B cell (primary cell): ENCODE measurements at regions of chr19 and their contacts with region 1.

Region 1: GRCh38 chr19:41597600-41598041 is 21.7 kb downstream of the CEACAM21 start:
- DNase-seq: peak; percentile 91
- ATAC-seq: peak; percentile 95
- H3K4me3 ChIP-seq: no peak overlapping the region
- H3K4me3 Mint-ChIP-seq: no peak overlapping the region
- H3K27ac ChIP-seq: no peak overlapping the region
- H3K27ac Mint-ChIP-seq: peak overlapping the region; percentile 42
- H3K4me1 ChIP-seq: peaks cover 0 to 19% of the 10 kb centered on the region in 2 donors
- H3K4me1 Mint-ChIP-seq: peaks cover 14% of the 10 kb centered on the region
- H3K27me3 ChIP-seq: peaks cover 0 to 3% (median 0%) of the 10 kb centered on the region in 4 experiments
- H3K27me3 Mint-ChIP-seq: peaks cover 12% of the 10 kb centered on the region
- CTCF ChIP-seq: peak; percentile 93

Region 2: DNA sequence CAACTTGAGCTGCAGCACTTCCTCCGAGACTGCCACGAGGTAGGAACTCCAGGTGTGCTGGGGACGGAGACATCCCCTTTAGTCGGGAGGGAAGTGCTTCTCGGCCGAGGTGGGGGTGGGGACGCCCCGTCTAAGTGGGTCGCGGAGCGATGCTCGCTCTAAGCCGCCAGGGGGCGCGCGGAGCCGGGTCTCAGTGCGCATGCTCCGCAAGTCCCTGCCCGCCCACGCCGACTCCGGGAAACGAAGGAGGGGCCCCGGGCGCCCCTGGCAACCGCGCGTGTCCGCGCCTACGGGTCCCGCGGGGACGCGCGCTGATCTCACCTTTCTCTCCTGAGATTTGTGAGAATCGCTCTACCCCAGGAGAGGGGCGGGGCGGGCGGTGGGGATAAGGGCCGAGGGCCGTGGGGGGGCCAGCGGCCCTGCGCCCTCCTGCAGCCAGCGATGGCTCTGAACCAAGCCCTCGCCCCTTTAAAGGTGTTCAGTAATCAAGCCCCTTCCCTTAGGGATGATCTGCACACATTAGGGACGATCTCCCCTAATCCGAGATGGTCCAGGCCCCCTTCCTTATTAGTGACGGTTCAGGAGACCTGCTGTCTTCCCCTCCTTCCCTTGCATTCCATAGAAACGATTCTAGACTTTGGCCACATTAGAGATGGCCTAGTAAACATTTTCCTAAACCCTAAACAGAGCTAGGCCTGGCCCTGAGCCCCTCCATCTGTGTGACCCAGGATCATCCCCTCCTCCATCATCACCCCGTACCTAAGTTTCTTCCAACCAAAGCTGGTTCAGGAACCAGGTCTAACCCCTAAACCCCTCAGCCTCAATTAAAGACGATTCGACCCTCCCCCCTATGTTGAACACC is 1068.3 kb before region 1 on chr19:
- CTCF ChIA-PET with region 1: no interaction called
- POLR2A ChIA-PET with region 1: no interaction called
- intact Hi-C with region 1: loop called (anchors 5 kb)
- DNase-seq: peak; percentile 95
- ATAC-seq: peak; percentile 91
- H3K4me3 ChIP-seq: peak overlapping the region; percentile 9 to 69 (median 41)
- H3K4me3 Mint-ChIP-seq: peak overlapping the region; percentile 82
- H3K27ac ChIP-seq: no peak overlapping the region
- H3K27ac Mint-ChIP-seq: peak overlapping the region; percentile 64
- H3K4me1 ChIP-seq: peaks cover 13 to 14% of the 10 kb centered on the region in 2 donors
- H3K4me1 Mint-ChIP-seq: peaks cover 13% of the 10 kb centered on the region
- H3K27me3 ChIP-seq: peaks cover 0 to 35% (median 18%) of the 10 kb centered on the region in 4 experiments
- H3K27me3 Mint-ChIP-seq: peaks cover 44% of the 10 kb centered on the region
- CTCF ChIP-seq: peak; percentile 91

Region 3: DNA sequence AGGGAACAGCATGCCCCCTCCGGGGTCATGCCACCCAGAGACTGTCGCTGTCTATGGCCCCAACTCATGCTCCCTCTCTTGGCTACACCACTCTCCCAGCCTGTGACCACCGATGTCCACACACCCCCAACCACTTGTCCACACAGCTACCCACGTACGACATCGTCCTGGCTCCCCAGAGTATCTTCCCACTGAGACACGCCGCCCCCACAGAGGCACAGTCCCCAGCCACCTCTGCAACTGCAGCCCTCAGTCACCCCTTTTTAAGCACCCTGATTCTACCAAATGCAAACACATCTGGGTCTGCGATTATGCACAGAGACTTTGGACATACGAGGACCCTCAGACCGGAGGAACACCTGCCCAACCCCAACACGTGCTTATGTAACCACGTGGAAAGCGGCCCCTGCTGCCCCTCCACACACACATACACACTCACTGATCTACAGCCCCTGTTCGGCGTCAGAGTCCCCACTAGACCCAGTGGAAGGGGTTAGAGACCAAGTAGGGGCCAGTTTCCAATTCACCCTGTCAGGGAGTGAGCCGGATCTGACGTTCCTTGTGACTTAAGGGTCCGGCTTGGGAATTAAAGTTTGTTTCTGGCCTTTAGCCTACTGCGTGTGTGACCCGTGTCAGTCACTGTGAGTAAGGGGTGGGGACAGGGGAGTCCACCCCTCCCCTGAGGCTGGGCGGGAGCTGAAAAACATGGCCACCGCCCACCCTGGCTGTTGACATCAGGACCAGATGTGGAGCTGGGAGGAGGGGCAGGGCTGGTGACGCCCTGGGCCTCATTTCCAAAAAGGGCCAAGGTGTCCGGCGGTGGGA is 390.5 kb before region 1 on chr19:
- CTCF ChIA-PET with region 1: interaction called, 16 read pairs
- POLR2A ChIA-PET with region 1: no interaction called
- intact Hi-C with region 1: loop called (anchors 5 kb)
- DNase-seq: no peak
- ATAC-seq: no peak
- H3K4me3 ChIP-seq: no peak overlapping the region
- H3K4me3 Mint-ChIP-seq: no peak overlapping the region
- H3K27ac ChIP-seq: no peak overlapping the region
- H3K27ac Mint-ChIP-seq: no peak overlapping the region
- H3K4me1 ChIP-seq: no peaks in the 10 kb centered on the region
- H3K4me1 Mint-ChIP-seq: no peaks in the 10 kb centered on the region
- H3K27me3 ChIP-seq: no peaks in the 10 kb centered on the region
- H3K27me3 Mint-ChIP-seq: no peaks in the 10 kb centered on the region
- CTCF ChIP-seq: no peak

Region 4: DNA sequence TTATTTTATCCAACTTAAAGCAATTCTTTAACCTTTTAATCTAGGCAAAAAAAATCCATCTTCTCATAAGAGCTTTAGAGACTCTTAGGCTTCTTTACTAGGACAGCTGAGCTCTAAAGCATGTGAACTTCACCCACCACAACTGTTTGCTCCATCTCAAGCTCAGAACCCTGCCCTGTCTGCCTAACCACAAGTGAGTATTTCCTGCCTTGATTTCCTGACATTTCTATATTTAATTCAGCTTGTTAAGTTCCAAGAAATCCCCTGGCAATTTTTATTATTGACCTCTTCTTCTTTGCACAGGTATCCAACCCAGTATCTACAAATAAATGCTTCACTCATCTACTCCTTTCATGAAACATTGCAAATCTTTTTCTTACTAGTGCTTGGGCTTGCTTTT is 42.7 kb before region 1 on chr19:
- CTCF ChIA-PET with region 1: interaction called, 4 read pairs
- POLR2A ChIA-PET with region 1: interaction called, 10 read pairs
- intact Hi-C with region 1: loop called (anchors 5 kb)
- DNase-seq: no peak
- ATAC-seq: peak; percentile 25
- H3K4me3 ChIP-seq: peak overlapping the region in 3 of 5 experiments; percentile 27 to 97 (median 32)
- H3K4me3 Mint-ChIP-seq: peak overlapping the region; percentile 42
- H3K27ac ChIP-seq: peak overlapping the region; percentile 43 to 92
- H3K27ac Mint-ChIP-seq: peak overlapping the region; percentile 62
- H3K4me1 ChIP-seq: peaks cover 61 to 66% of the 10 kb centered on the region in 2 donors
- H3K4me1 Mint-ChIP-seq: peaks cover 73% of the 10 kb centered on the region
- H3K27me3 ChIP-seq: no peaks in the 10 kb centered on the region
- H3K27me3 Mint-ChIP-seq: no peaks in the 10 kb centered on the region
- CTCF ChIP-seq: no peak

Region 5: GRCh38 chr19:41575998-41576397 is 21.6 kb before region 1 on chr19 and contains the start of gene CEACAM21:
- CTCF ChIA-PET with region 1: interaction called, 19 read pairs
- POLR2A ChIA-PET with region 1: no interaction called
- intact Hi-C with region 1: loop called (anchors 2 kb)
- DNase-seq: peak; percentile 80
- ATAC-seq: peak; percentile 100
- H3K4me3 ChIP-seq: peak within 1 kb of the TSS; percentile 41 to 85 (median 59)
- H3K4me3 Mint-ChIP-seq: peak within 1 kb of the TSS; percentile 82
- H3K27ac ChIP-seq: peak within 1 kb of the TSS; percentile 68 to 84
- H3K27ac Mint-ChIP-seq: peak within 1 kb of the TSS; percentile 95
- H3K4me1 ChIP-seq: peaks cover 18 to 20% of the 10 kb centered on the region in 2 donors
- H3K4me1 Mint-ChIP-seq: peaks cover 25% of the 10 kb centered on the region
- H3K27me3 ChIP-seq: no peaks in the 10 kb centered on the region
- H3K27me3 Mint-ChIP-seq: no peaks in the 10 kb centered on the region
- CTCF ChIP-seq: no peak
- total RNA-seq, gene CEACAM21: 18.9 and 19.3 TPM in 2 replicates

Region 6: GRCh38 chr19:41616792-41617621 is 19.4 kb after region 1 on chr19:
- CTCF ChIA-PET with region 1: no interaction called
- POLR2A ChIA-PET with region 1: no interaction called
- intact Hi-C with region 1: no loop called
- DNase-seq: no peak
- ATAC-seq: no peak
- H3K4me3 ChIP-seq: no peak overlapping the region
- H3K4me3 Mint-ChIP-seq: no peak overlapping the region
- H3K27ac ChIP-seq: no peak overlapping the region
- H3K27ac Mint-ChIP-seq: no peak overlapping the region
- H3K4me1 ChIP-seq: no peaks in the 10 kb centered on the region
- H3K4me1 Mint-ChIP-seq: no peaks in the 10 kb centered on the region
- H3K27me3 ChIP-seq: peaks cover 0 to 16% (median 5%) of the 10 kb centered on the region in 4 experiments
- H3K27me3 Mint-ChIP-seq: peaks cover 45% of the 10 kb centered on the region
- CTCF ChIP-seq: no peak